ENCODE measurements at regions of chr7 and their contacts with region 1.

Region 1: GRCh38 chr7:43925984-43926797 is at the start of gene UBE2D4:
- DNase-seq: peak; percentile 80 to 93 (median 86)
- ATAC-seq: peak; percentile 85
- H3K4me3 ChIP-seq: peak within 1 kb of the TSS; percentile 67
- H3K4me3 Mint-ChIP-seq: peak within 1 kb of the TSS; percentile 95
- H3K27ac ChIP-seq: peak within 1 kb of the TSS; percentile 80 to 89
- H3K27ac Mint-ChIP-seq: peak within 1 kb of the TSS; percentile 97
- H3K4me1 ChIP-seq: peaks cover 33% of the 10 kb centered on the region
- H3K4me1 Mint-ChIP-seq: peaks cover 48% of the 10 kb centered on the region
- H3K27me3 ChIP-seq: no peaks in the 10 kb centered on the region
- H3K27me3 Mint-ChIP-seq: no peaks in the 10 kb centered on the region
- CTCF ChIP-seq: no peak
- total RNA-seq, gene UBE2D4: 6.1 to 7.8 TPM

Region 2: DNA sequence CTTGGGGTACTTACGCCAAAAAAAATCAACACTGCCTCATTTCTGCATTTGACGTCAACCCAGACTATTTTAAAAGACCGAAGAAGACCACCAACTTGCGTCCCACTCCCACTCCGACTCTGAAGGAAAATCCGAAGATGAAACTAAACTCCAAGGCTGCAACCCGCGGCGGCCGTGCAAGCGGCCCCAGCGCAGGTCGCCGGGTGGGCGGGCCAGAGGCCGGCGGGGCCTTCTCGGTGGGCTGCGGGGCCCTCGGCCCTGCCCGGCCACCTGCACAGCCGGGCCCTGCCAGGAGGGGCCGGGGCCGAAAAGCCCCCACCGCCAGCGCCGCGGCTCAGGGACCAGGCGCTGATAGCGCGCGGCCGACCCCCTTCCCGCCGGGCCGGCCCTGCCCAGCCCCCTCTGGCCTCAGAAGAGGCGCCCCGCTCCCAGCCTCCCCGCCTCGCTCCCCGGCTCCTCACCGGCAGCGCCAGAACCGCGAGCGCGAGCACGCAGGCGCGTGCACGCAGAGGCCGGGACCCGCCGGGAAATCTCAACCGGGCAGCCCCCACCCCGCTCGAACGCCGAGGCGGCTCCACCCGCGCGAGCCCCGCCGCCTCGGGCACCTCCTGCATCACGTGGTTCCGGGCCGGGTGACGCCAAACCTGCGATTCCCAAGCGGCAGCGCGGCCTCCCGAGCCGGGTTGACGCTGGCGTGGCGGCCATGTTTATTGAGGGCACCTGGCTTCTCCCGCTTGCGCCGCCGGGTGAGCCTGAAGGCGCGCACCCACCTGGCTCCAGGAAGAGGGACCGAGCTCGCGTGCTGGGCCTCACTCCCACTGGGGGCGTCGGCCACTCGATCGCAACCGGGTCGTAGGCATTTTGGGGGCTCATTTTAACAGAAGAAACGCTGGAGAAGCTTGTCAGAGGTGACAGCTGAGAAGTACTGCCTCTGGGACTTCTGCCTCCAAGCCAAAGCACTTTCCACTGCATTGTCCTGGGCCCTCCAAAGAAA is 1014.4 kb before region 1 on chr7 and contains the start of gene C7orf25:
- CTCF ChIA-PET with region 1: no interaction called
- POLR2A ChIA-PET with region 1: no interaction called
- intact Hi-C with region 1: loop called in 1 of 2 experiments (anchors 5 kb)
- DNase-seq: peak; percentile 89 to 98 (median 95)
- ATAC-seq: peak; percentile 95
- H3K4me3 ChIP-seq: peak within 1 kb of the TSS; percentile 69
- H3K4me3 Mint-ChIP-seq: peak within 1 kb of the TSS; percentile 93
- H3K27ac ChIP-seq: peak within 1 kb of the TSS in 1 of 2 donors; percentile 61
- H3K27ac Mint-ChIP-seq: peak within 1 kb of the TSS; percentile 86
- H3K4me1 ChIP-seq: peaks cover 21% of the 10 kb centered on the region
- H3K4me1 Mint-ChIP-seq: peaks cover 47% of the 10 kb centered on the region
- H3K27me3 ChIP-seq: no peaks in the 10 kb centered on the region
- H3K27me3 Mint-ChIP-seq: no peaks in the 10 kb centered on the region
- CTCF ChIP-seq: no peak
- total RNA-seq, gene C7orf25: 2.1 to 3.7 TPM

Region 3: DNA sequence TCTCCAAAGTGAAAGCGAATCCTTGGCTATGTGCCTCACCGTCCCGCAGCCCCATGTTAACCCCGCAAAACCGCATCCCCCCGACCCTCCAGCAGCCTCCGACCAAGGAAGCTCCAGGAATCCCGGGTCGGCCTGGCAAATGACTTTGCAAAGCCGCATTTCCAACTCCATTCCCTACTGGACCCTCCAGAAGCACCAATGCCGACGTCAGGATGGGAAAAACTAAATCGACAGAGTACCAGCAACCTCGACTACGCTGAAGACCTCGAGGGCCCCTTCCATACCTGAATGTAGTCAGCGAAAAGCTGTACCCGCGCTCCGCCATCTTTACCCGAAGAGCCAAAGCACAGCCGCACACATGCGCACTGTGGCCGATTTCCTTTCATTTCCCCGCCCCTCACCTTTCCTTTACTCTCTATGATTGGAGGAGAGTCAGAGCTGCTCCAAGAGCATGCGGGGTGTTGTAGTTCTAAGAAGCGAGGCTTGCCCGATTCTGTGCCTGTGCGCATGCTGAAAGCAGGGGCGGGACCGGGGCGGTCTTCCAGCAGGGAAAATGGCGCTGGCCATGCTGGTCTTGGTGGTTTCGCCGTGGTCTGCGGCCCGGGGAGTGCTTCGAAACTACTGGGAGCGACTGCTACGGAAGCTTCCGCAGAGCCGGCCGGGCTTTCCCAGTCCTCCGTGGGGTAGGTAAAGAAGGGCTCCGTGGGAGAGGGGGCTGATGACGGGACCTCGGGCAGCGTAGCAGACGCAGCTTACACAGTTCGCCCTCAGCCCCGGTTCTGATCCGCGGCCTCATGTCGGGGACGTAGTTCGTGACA is 994.1 kb before region 1 on chr7 and contains the starts of genes MRPL32 and PSMA2:
- CTCF ChIA-PET with region 1: no interaction called
- POLR2A ChIA-PET with region 1: interaction called, 4 read pairs
- intact Hi-C with region 1: loop called (anchors 5 kb)
- DNase-seq: peak; percentile 88 to 98 (median 91)
- ATAC-seq: peak; percentile 98
- H3K4me3 ChIP-seq: peak within 1 kb of the TSS; percentile 87
- H3K4me3 Mint-ChIP-seq: peak within 1 kb of the TSS; percentile 92
- H3K27ac ChIP-seq: peak within 1 kb of the TSS; percentile 74 to 87
- H3K27ac Mint-ChIP-seq: peak within 1 kb of the TSS; percentile 92
- H3K4me1 ChIP-seq: peaks cover 28% of the 10 kb centered on the region
- H3K4me1 Mint-ChIP-seq: peaks cover 79% of the 10 kb centered on the region
- H3K27me3 ChIP-seq: no peaks in the 10 kb centered on the region
- H3K27me3 Mint-ChIP-seq: no peaks in the 10 kb centered on the region
- CTCF ChIP-seq: no peak
- total RNA-seq, gene MRPL32: 57.1 to 60.7 TPM
- total RNA-seq, gene PSMA2: 38.8 to 41.0 TPM

Region 4: GRCh38 chr7:43729214-43729923 is 196.8 kb before region 1 on chr7 and contains the start of gene COA1:
- CTCF ChIA-PET with region 1: no interaction called
- POLR2A ChIA-PET with region 1: no interaction called
- intact Hi-C with region 1: loop called in 1 of 2 experiments (anchors 10 kb)
- DNase-seq: peak; percentile 68 to 94 (median 74)
- ATAC-seq: peak; percentile 93
- H3K4me3 ChIP-seq: peak within 1 kb of the TSS; percentile 98
- H3K4me3 Mint-ChIP-seq: peak within 1 kb of the TSS; percentile 96
- H3K27ac ChIP-seq: peak within 1 kb of the TSS; percentile 75
- H3K27ac Mint-ChIP-seq: peak within 1 kb of the TSS; percentile 91
- H3K4me1 ChIP-seq: peaks cover 24% of the 10 kb centered on the region
- H3K4me1 Mint-ChIP-seq: peaks cover 55% of the 10 kb centered on the region
- H3K27me3 ChIP-seq: no peaks in the 10 kb centered on the region
- H3K27me3 Mint-ChIP-seq: no peaks in the 10 kb centered on the region
- CTCF ChIP-seq: no peak
- total RNA-seq, gene COA1: 78.9 to 80.7 TPM

Region 5: GRCh38 chr7:43850348-43851116 is 75.7 kb before region 1 on chr7:
- CTCF ChIA-PET with region 1: no interaction called
- POLR2A ChIA-PET with region 1: no interaction called
- intact Hi-C with region 1: no loop called
- DNase-seq: no peak
- ATAC-seq: no peak
- H3K4me3 ChIP-seq: no peak overlapping the region
- H3K4me3 Mint-ChIP-seq: no peak overlapping the region
- H3K27ac ChIP-seq: no peak overlapping the region
- H3K27ac Mint-ChIP-seq: no peak overlapping the region
- H3K4me1 ChIP-seq: no peaks in the 10 kb centered on the region
- H3K4me1 Mint-ChIP-seq: no peaks in the 10 kb centered on the region
- H3K27me3 ChIP-seq: no peaks in the 10 kb centered on the region
- H3K27me3 Mint-ChIP-seq: no peaks in the 10 kb centered on the region
- CTCF ChIP-seq: no peak

Region 6: GRCh38 chr7:43869006-43869866 is 57.0 kb before region 1 on chr7 and contains the start of gene MRPS24:
- CTCF ChIA-PET with region 1: no interaction called
- POLR2A ChIA-PET with region 1: interaction called, 17 read pairs
- intact Hi-C with region 1: loop called (anchors 2 kb)
- DNase-seq: peak; percentile 92 to 99 (median 95)
- ATAC-seq: peak; percentile 98
- H3K4me3 ChIP-seq: peak within 1 kb of the TSS; percentile 70
- H3K4me3 Mint-ChIP-seq: peak within 1 kb of the TSS; percentile 92
- H3K27ac ChIP-seq: peak within 1 kb of the TSS; percentile 58 to 68
- H3K27ac Mint-ChIP-seq: peak within 1 kb of the TSS; percentile 90
- H3K4me1 ChIP-seq: peaks cover 20% of the 10 kb centered on the region
- H3K4me1 Mint-ChIP-seq: peaks cover 26% of the 10 kb centered on the region
- H3K27me3 ChIP-seq: no peaks in the 10 kb centered on the region
- H3K27me3 Mint-ChIP-seq: no peaks in the 10 kb centered on the region
- CTCF ChIP-seq: no peak
- total RNA-seq, gene MRPS24: 63.1 to 69.7 TPM

Region 7: GRCh38 chr7:43906331-43907010 is 19.7 kb before region 1 on chr7 and contains the start of gene URGCP:
- CTCF ChIA-PET with region 1: interaction called, 4 read pairs
- POLR2A ChIA-PET with region 1: interaction called, 15 read pairs
- intact Hi-C with region 1: loop called in 1 of 2 experiments (anchors 1 kb)
- DNase-seq: peak; percentile 29 to 77 (median 50)
- ATAC-seq: peak; percentile 92
- H3K4me3 ChIP-seq: peak within 1 kb of the TSS; percentile 66
- H3K4me3 Mint-ChIP-seq: peak within 1 kb of the TSS; percentile 98
- H3K27ac ChIP-seq: peak within 1 kb of the TSS; percentile 25 to 29
- H3K27ac Mint-ChIP-seq: peak within 1 kb of the TSS; percentile 92
- H3K4me1 ChIP-seq: peaks cover 24% of the 10 kb centered on the region
- H3K4me1 Mint-ChIP-seq: peaks cover 47% of the 10 kb centered on the region
- H3K27me3 ChIP-seq: no peaks in the 10 kb centered on the region
- H3K27me3 Mint-ChIP-seq: no peaks in the 10 kb centered on the region
- CTCF ChIP-seq: no peak
- total RNA-seq, gene URGCP: 21.8 to 22.5 TPM

Region 8: GRCh38 chr7:44573464-44574286 is 647.5 kb after region 1 on chr7 and contains the start of gene DDX56:
- CTCF ChIA-PET with region 1: no interaction called
- POLR2A ChIA-PET with region 1: interaction called, 3 read pairs
- intact Hi-C with region 1: loop called in 1 of 2 experiments (anchors 5 kb)
- DNase-seq: peak; percentile 83 to 97 (median 90)
- ATAC-seq: peak; percentile 96
- H3K4me3 ChIP-seq: peak within 1 kb of the TSS; percentile 71
- H3K4me3 Mint-ChIP-seq: peak within 1 kb of the TSS; percentile 95
- H3K27ac ChIP-seq: peak within 1 kb of the TSS; percentile 77 to 82
- H3K27ac Mint-ChIP-seq: peak within 1 kb of the TSS; percentile 99
- H3K4me1 ChIP-seq: peaks cover 35% of the 10 kb centered on the region
- H3K4me1 Mint-ChIP-seq: peaks cover 48% of the 10 kb centered on the region
- H3K27me3 ChIP-seq: no peaks in the 10 kb centered on the region
- H3K27me3 Mint-ChIP-seq: no peaks in the 10 kb centered on the region
- CTCF ChIP-seq: no peak
- total RNA-seq, gene DDX56: 126 to 127 TPM